B cell (primary cell): ENCODE measurements at regions of chr1 and their contacts with region 1.

Region 1: DNA sequence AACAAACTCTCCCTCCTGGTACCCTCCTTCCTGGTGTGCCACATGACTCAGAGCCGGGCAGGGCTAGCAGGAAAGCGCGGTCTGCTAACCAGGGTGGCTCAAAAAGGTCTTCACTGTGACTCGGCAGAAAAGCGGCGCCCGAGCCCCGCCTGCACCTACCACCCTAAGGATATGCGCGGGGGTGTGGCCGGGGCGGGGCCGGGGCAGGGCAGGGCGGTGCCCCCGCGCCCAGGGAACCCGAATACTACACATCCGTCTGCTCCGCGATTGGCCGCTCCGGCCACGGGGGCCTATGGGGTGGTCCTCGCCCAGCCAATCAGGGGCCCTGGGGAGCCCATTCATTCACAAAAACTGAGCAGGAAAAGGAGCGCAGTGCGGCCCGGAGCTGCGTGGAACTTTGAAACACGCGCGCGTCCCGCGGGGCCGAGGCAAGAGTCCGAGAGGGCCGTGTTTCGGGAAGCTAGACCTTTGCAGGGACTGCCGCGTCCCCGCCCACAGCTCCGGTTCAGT is 1.7 kb downstream of the LRP8 start:
- DNase-seq: peak; percentile 92
- ATAC-seq: peak; percentile 88
- H3K4me3 ChIP-seq: peak overlapping the region in 4 of 5 experiments; percentile 80 to 96 (median 86)
- H3K4me3 Mint-ChIP-seq: peak overlapping the region; percentile 97
- H3K27ac ChIP-seq: peak overlapping the region in 1 of 2 donors; percentile 21
- H3K27ac Mint-ChIP-seq: peak overlapping the region; percentile 91
- H3K4me1 ChIP-seq: peaks cover 6 to 25% of the 10 kb centered on the region in 2 donors
- H3K4me1 Mint-ChIP-seq: peaks cover 24% of the 10 kb centered on the region
- H3K27me3 ChIP-seq: no peaks in the 10 kb centered on the region
- H3K27me3 Mint-ChIP-seq: no peaks in the 10 kb centered on the region
- CTCF ChIP-seq: no peak

Region 2: GRCh38 chr1:53196485-53197270 is 129.5 kb before region 1 on chr1 and contains the start of gene CPT2:
- CTCF ChIA-PET with region 1: no interaction called
- POLR2A ChIA-PET with region 1: interaction called, 3 read pairs
- intact Hi-C with region 1: loop called (anchors 1 kb)
- DNase-seq: peak; percentile 88
- ATAC-seq: peak; percentile 99
- H3K4me3 ChIP-seq: peak within 1 kb of the TSS; percentile 72 to 91 (median 76)
- H3K4me3 Mint-ChIP-seq: peak within 1 kb of the TSS; percentile 97
- H3K27ac ChIP-seq: peak within 1 kb of the TSS; percentile 81 to 96
- H3K27ac Mint-ChIP-seq: peak within 1 kb of the TSS; percentile 95
- H3K4me1 ChIP-seq: peaks cover 16 to 20% of the 10 kb centered on the region in 2 donors
- H3K4me1 Mint-ChIP-seq: peaks cover 28% of the 10 kb centered on the region
- H3K27me3 ChIP-seq: no peaks in the 10 kb centered on the region
- H3K27me3 Mint-ChIP-seq: no peaks in the 10 kb centered on the region
- CTCF ChIP-seq: no peak
- total RNA-seq, gene CPT2: 16.7 and 19.8 TPM in 2 replicates

Region 3: DNA sequence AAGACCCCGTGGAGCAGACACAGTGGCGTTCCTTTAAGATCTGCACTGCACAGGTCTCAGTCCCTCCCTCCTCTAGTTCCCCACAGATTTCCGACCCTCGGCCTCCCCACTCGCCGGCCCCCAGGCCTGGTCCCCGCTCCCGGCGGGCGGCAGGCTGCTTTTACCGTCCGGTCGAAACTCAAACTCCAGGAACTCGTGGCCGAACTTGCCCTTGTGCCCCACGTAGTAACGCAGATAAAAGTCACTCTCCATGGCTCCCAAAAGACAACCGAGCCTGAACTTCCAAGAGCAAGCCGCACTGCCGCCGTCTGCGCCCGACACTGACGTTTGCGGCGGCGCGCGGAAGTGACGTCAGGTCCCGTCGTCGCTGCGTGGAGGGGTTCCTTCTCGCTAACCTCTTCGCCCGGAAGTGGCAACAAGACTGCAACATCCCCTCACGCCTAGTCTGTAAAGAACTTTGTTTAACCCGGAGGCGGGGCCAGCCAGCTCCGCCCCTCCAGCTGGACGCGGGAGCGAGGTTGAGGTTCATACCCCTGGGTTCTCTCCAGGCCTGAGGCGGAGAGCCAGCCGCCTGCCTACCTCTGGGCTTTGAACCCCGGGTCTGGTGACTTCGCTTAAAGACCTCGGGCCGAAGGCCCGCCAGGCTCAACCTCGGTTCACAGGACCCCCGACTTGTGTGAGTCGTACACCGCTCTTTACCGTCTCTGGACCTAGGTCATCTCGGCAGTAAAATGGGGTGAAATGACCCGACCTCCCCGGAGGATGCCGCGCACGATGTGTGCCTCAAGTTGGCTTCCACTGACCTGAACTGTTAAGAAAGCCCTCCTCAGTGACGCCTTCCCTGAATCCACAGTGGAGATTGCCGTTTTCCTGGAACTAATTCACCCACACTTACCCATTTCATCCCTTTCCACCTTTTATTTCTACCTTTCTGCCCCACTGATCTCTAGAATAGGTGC is 87.7 kb before region 1 on chr1 and contains the start of gene MAGOH:
- CTCF ChIA-PET with region 1: no interaction called
- POLR2A ChIA-PET with region 1: no interaction called
- intact Hi-C with region 1: loop called (anchors 1 kb)
- DNase-seq: peak; percentile 95
- ATAC-seq: peak; percentile 99
- H3K4me3 ChIP-seq: peak within 1 kb of the TSS; percentile 94 to 98 (median 98)
- H3K4me3 Mint-ChIP-seq: peak within 1 kb of the TSS; percentile 99
- H3K27ac ChIP-seq: peak within 1 kb of the TSS; percentile 70 to 89
- H3K27ac Mint-ChIP-seq: peak within 1 kb of the TSS; percentile 96
- H3K4me1 ChIP-seq: peaks cover 18 to 26% of the 10 kb centered on the region in 2 donors
- H3K4me1 Mint-ChIP-seq: peaks cover 29% of the 10 kb centered on the region
- H3K27me3 ChIP-seq: no peaks in the 10 kb centered on the region
- H3K27me3 Mint-ChIP-seq: no peaks in the 10 kb centered on the region
- CTCF ChIP-seq: no peak
- total RNA-seq, gene MAGOH: 36.2 and 45.6 TPM in 2 replicates

Region 4: GRCh38 chr1:53367503-53368304 is 41.6 kb after region 1 on chr1:
- CTCF ChIA-PET with region 1: interaction called, 12 read pairs
- POLR2A ChIA-PET with region 1: interaction called, 17 read pairs
- intact Hi-C with region 1: loop called (anchors 1 kb)
- DNase-seq: peak; percentile 73
- ATAC-seq: peak; percentile 88
- H3K4me3 ChIP-seq: peak overlapping the region; percentile 19 to 75 (median 59)
- H3K4me3 Mint-ChIP-seq: peak overlapping the region; percentile 98
- H3K27ac ChIP-seq: peak overlapping the region; percentile 42 to 85
- H3K27ac Mint-ChIP-seq: peak overlapping the region; percentile 97
- H3K4me1 ChIP-seq: peaks cover 30 to 43% of the 10 kb centered on the region in 2 donors
- H3K4me1 Mint-ChIP-seq: peaks cover 45% of the 10 kb centered on the region
- H3K27me3 ChIP-seq: no peaks in the 10 kb centered on the region
- H3K27me3 Mint-ChIP-seq: no peaks in the 10 kb centered on the region
- CTCF ChIP-seq: no peak

Region 5: GRCh38 chr1:53889304-53890298 is 563.5 kb after region 1 on chr1 and contains the start of gene YIPF1:
- CTCF ChIA-PET with region 1: no interaction called
- POLR2A ChIA-PET with region 1: no interaction called
- intact Hi-C with region 1: loop called (anchors 10 kb)
- DNase-seq: peak; percentile 87
- ATAC-seq: peak; percentile 99
- H3K4me3 ChIP-seq: peak within 1 kb of the TSS; percentile 76 to 95 (median 83)
- H3K4me3 Mint-ChIP-seq: peak within 1 kb of the TSS; percentile 96
- H3K27ac ChIP-seq: peak within 1 kb of the TSS; percentile 14 to 71
- H3K27ac Mint-ChIP-seq: peak within 1 kb of the TSS; percentile 79
- H3K4me1 ChIP-seq: peaks cover 19 to 27% of the 10 kb centered on the region in 2 donors
- H3K4me1 Mint-ChIP-seq: peaks cover 44% of the 10 kb centered on the region
- H3K27me3 ChIP-seq: no peaks in the 10 kb centered on the region
- H3K27me3 Mint-ChIP-seq: peaks cover 1% of the 10 kb centered on the region
- CTCF ChIP-seq: no peak
- total RNA-seq, gene YIPF1: 13.9 and 19.3 TPM in 2 replicates